ENCODE measurements at regions of chr10 and their contacts with region 1.

Region 1: DNA sequence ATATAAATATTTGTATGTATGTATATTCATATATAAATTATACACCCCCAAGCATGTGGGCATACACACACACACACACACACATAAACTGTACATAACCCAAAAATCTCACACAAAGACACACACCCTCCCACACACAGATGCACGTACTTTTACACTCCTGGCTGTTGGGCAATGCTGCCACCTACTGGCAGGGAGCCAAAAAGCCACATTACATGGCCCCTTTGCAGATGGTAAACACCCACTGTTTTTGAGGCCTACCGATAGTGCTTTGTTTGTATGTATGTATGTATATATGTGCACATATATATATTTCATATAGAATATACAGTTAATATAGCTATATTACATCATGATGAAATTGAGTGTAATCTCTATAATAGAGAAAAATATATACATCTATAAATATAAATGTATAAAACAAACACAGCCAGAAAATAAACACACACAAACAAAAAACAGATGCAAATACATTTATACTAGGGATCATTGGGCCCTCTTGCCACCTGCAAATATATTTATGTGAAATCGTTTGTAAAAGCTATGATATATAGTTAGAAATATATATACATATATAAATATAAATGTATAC is 120.1 kb upstream of the ACBD5 start:
- DNase-seq: no peak
- H3K4me3 ChIP-seq: no peak overlapping the region
- H3K27ac ChIP-seq: no peak overlapping the region
- H3K4me1 ChIP-seq: no peaks in the 10 kb centered on the region
- H3K27me3 ChIP-seq: no peaks in the 10 kb centered on the region
- CTCF ChIP-seq: peak; percentile 58 to 71 (median 60)
- EP300 ChIP-seq: no peak
- POLR2A ChIP-seq: no peak

Region 2: DNA sequence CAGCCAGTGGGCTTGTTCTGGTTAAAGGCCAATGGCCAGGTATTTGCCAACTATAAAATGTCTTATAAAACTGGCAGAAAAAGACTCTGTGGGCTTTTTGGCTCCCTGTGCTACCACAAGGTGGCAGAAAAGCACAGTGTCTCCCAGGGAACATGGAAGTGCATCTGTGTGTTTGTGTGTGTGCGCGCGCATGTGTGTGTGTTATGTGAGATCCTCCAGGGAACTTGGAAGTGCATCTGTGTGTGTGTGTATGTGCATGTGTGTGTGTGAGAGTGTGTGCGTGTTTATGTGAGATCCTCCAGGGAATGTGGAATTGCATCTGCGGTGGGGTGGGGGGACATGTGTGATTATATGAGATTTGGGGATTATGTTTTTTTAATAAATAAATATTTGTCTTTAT is 469.7 kb before region 1 on chr10:
- intact Hi-C with region 1: loop called (anchors 5 kb)
- DNase-seq: peak; percentile 79
- H3K4me3 ChIP-seq: no peak overlapping the region
- H3K27ac ChIP-seq: no peak overlapping the region
- H3K4me1 ChIP-seq: no peaks in the 10 kb centered on the region
- H3K27me3 ChIP-seq: peaks cover 0 to 2% (median 0%) of the 10 kb centered on the region in 4 donors
- CTCF ChIP-seq: peak in 1 of 3 experiments; percentile 10
- EP300 ChIP-seq: no peak
- POLR2A ChIP-seq: no peak

Region 3: GRCh38 chr10:27223964-27224363 is 136.7 kb before region 1 on chr10:
- intact Hi-C with region 1: loop called (anchors 5 kb)
- DNase-seq: no peak
- H3K4me3 ChIP-seq: no peak overlapping the region
- H3K27ac ChIP-seq: no peak overlapping the region
- H3K4me1 ChIP-seq: no peaks in the 10 kb centered on the region
- H3K27me3 ChIP-seq: no peaks in the 10 kb centered on the region
- CTCF ChIP-seq: peak; percentile 50 to 61 (median 58)
- EP300 ChIP-seq: no peak
- POLR2A ChIP-seq: no peak

Measured in esophagus muscularis mucosa (tissue), 4 donors.